ENCODE measurements at regions of chr11 and their contacts with region 1.

Region 1: GRCh38 chr11:72080256-72080974 is at the starts of genes LRRC51 and NUMA1:
- DNase-seq: peak; percentile 99
- H3K4me3 ChIP-seq: peak within 1 kb of the TSS; percentile 98
- H3K27ac ChIP-seq: peak within 1 kb of the TSS; percentile 62
- H3K4me1 ChIP-seq: peaks cover 41% of the 10 kb centered on the region
- CTCF ChIP-seq: no peak
- total RNA-seq, gene LRRC51: 15.3 and 21.1 TPM in 2 replicates
- total RNA-seq, gene NUMA1: 159 and 160 TPM in 2 replicates

Region 2: DNA sequence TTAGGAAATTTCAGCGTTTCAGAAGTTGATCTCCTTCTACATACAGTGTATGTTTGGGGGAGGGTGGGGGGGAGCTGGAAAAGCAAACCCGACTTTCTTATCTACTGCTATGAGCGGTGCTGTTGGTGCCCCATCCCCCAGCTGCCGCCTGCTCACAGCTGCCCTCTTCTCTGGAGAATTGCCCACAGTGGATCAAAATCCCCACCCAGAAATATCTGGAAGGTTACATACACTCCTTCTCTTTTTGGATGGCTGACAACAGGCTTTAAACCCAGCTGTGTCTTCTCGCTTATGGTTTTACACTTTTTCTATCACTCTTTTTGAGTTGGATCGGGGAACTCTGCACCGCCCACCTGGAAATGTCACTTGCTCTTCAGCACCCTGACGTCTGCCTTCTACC is 688.6 kb before region 1 on chr11:
- CTCF ChIA-PET with region 1: no interaction called
- POLR2A ChIA-PET with region 1: no interaction called
- intact Hi-C with region 1: no loop called
- DNase-seq: no peak
- H3K4me3 ChIP-seq: no peak overlapping the region
- H3K27ac ChIP-seq: no peak overlapping the region
- H3K4me1 ChIP-seq: peaks cover 13% of the 10 kb centered on the region
- CTCF ChIP-seq: no peak

Region 3: GRCh38 chr11:72038491-72038890 is 41.9 kb before region 1 on chr11:
- CTCF ChIA-PET with region 1: no interaction called
- POLR2A ChIA-PET with region 1: interaction called, 9 read pairs
- intact Hi-C with region 1: loop called (anchors 1 kb)
- DNase-seq: no peak
- H3K4me3 ChIP-seq: peak overlapping the region; percentile 66
- H3K27ac ChIP-seq: peak overlapping the region; percentile 84
- H3K4me1 ChIP-seq: peaks cover 79% of the 10 kb centered on the region
- CTCF ChIP-seq: no peak

Region 4: GRCh38 chr11:72102946-72103753 is 22.7 kb after region 1 on chr11 and contains the start of gene LAMTOR1:
- CTCF ChIA-PET with region 1: no interaction called
- POLR2A ChIA-PET with region 1: interaction called, 6 read pairs
- intact Hi-C with region 1: loop called (anchors 1 kb)
- DNase-seq: peak; percentile 99
- H3K4me3 ChIP-seq: peak within 1 kb of the TSS; percentile 76
- H3K27ac ChIP-seq: peak within 1 kb of the TSS; percentile 71
- H3K4me1 ChIP-seq: peaks cover 25% of the 10 kb centered on the region
- CTCF ChIP-seq: peak; percentile 40
- total RNA-seq, gene LAMTOR1: 50.7 and 64.1 TPM in 2 replicates

Measured in OCI-LY7 (cell line).